ENCODE measurements at regions of chr1 and their contacts with region 1.

Region 1: GRCh38 chr1:59759156-59759925 is 55.4 kb upstream of the HOOK1 start:
- DNase-seq: peak; percentile 85
- H3K4me3 Mint-ChIP-seq: peak overlapping the region; percentile 38
- H3K27ac Mint-ChIP-seq: no peak overlapping the region
- H3K4me1 Mint-ChIP-seq: peaks cover 28% of the 10 kb centered on the region
- H3K27me3 Mint-ChIP-seq: no peaks in the 10 kb centered on the region
- CTCF ChIP-seq: peak; percentile 96

Region 2: GRCh38 chr1:58652651-58653184 is 1106.6 kb before region 1 on chr1:
- CTCF ChIA-PET with region 1: interaction called, 6 read pairs
- POLR2A ChIA-PET with region 1: interaction called, 3 read pairs
- intact Hi-C with region 1: loop called (anchors 5 kb)
- DNase-seq: peak; percentile 84
- H3K4me3 Mint-ChIP-seq: no peak overlapping the region
- H3K27ac Mint-ChIP-seq: no peak overlapping the region
- H3K4me1 Mint-ChIP-seq: peaks cover 22% of the 10 kb centered on the region
- H3K27me3 Mint-ChIP-seq: no peaks in the 10 kb centered on the region
- CTCF ChIP-seq: peak; percentile 75

Region 3: DNA sequence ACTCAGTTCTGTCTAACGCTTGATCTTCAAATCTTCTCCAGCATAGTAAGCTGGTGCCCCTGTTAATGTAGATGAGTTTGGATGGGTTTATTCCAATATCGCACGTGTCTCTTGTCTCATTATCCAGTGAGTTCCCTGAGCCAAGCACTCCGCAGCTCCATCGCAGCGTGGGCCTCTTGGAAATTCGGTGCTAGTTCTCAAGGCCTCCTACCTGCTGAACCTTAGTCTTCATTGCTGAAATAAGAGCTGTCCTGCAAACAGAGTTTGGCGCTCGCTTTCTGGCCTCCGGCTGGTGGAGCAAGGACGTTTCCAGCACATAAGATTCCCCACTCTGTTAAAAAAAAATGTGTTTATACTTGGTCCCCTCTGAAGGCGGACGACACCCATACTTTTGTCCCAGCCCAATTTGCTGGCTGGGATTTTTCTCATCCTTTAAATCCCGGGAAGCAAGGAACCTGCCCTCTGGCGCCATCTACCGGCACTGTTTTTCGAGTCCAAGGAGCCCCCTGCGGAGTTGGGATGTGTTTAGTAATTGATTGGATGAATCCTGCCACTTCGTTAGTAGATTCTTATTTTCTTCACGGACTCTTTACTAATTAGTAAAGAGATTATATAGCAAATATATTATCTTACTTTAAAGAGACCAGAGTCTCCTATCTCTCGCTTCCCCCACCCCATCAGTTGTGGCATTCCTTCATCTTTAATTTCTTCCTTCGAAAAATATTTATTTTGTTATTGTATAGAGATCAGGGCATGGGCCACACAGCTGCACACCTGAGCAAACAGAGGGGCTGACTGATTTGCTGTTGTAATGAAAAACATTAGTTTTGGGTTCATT is 990.2 kb before region 1 on chr1:
- CTCF ChIA-PET with region 1: interaction called, 8 read pairs
- POLR2A ChIA-PET with region 1: no interaction called
- intact Hi-C with region 1: loop called (anchors 2 kb)
- DNase-seq: peak; percentile 78
- H3K4me3 Mint-ChIP-seq: no peak overlapping the region
- H3K27ac Mint-ChIP-seq: no peak overlapping the region
- H3K4me1 Mint-ChIP-seq: peaks cover 29% of the 10 kb centered on the region
- H3K27me3 Mint-ChIP-seq: no peaks in the 10 kb centered on the region
- CTCF ChIP-seq: peak; percentile 67

Region 4: GRCh38 chr1:59107516-59107915 is 651.8 kb before region 1 on chr1:
- CTCF ChIA-PET with region 1: no interaction called
- POLR2A ChIA-PET with region 1: no interaction called
- intact Hi-C with region 1: no loop called
- DNase-seq: peak; percentile 91
- H3K4me3 Mint-ChIP-seq: no peak overlapping the region
- H3K27ac Mint-ChIP-seq: peak overlapping the region; percentile 72
- H3K4me1 Mint-ChIP-seq: peaks cover 8% of the 10 kb centered on the region
- H3K27me3 Mint-ChIP-seq: no peaks in the 10 kb centered on the region
- CTCF ChIP-seq: no peak

Region 5: GRCh38 chr1:59699227-59699847 is 60.0 kb before region 1 on chr1:
- CTCF ChIA-PET with region 1: interaction called, 21 read pairs
- POLR2A ChIA-PET with region 1: interaction called, 13 read pairs
- intact Hi-C with region 1: loop called (anchors 2 kb)
- DNase-seq: peak; percentile 59
- H3K4me3 Mint-ChIP-seq: no peak overlapping the region
- H3K27ac Mint-ChIP-seq: peak overlapping the region; percentile 57
- H3K4me1 Mint-ChIP-seq: peaks cover 24% of the 10 kb centered on the region
- H3K27me3 Mint-ChIP-seq: no peaks in the 10 kb centered on the region
- CTCF ChIP-seq: peak; percentile 76

Region 6: GRCh38 chr1:59730759-59731478 is 28.4 kb before region 1 on chr1:
- CTCF ChIA-PET with region 1: interaction called, 33 read pairs
- POLR2A ChIA-PET with region 1: interaction called, 8 read pairs
- intact Hi-C with region 1: no loop called
- DNase-seq: peak; percentile 91
- H3K4me3 Mint-ChIP-seq: no peak overlapping the region
- H3K27ac Mint-ChIP-seq: peak overlapping the region; percentile 74
- H3K4me1 Mint-ChIP-seq: peaks cover 38% of the 10 kb centered on the region
- H3K27me3 Mint-ChIP-seq: no peaks in the 10 kb centered on the region
- CTCF ChIP-seq: no peak

Region 7: GRCh38 chr1:59947047-59947938 is 188.0 kb after region 1 on chr1:
- CTCF ChIA-PET with region 1: interaction called, 8 read pairs
- POLR2A ChIA-PET with region 1: interaction called, 5 read pairs
- intact Hi-C with region 1: loop called (anchors 5 kb)
- DNase-seq: peak; percentile 76
- H3K4me3 Mint-ChIP-seq: no peak overlapping the region
- H3K27ac Mint-ChIP-seq: no peak overlapping the region
- H3K4me1 Mint-ChIP-seq: no peaks in the 10 kb centered on the region
- H3K27me3 Mint-ChIP-seq: peaks cover 14% of the 10 kb centered on the region
- CTCF ChIP-seq: peak; percentile 83